Posterior vena cava (tissue), 2 donors: ENCODE measurements at regions of chr16 and their contacts with region 1.

Region 1: GRCh38 chr16:67461600-67462592 is 19.1 kb downstream of the ATP6V0D1 start:
- DNase-seq: no peak

Region 2: GRCh38 chr16:67428146-67428731 is 33.7 kb before region 1 on chr16:
- intact Hi-C with region 1: loop called (anchors 2 to 5 kb)
- DNase-seq: peak; percentile 90

Region 3: DNA sequence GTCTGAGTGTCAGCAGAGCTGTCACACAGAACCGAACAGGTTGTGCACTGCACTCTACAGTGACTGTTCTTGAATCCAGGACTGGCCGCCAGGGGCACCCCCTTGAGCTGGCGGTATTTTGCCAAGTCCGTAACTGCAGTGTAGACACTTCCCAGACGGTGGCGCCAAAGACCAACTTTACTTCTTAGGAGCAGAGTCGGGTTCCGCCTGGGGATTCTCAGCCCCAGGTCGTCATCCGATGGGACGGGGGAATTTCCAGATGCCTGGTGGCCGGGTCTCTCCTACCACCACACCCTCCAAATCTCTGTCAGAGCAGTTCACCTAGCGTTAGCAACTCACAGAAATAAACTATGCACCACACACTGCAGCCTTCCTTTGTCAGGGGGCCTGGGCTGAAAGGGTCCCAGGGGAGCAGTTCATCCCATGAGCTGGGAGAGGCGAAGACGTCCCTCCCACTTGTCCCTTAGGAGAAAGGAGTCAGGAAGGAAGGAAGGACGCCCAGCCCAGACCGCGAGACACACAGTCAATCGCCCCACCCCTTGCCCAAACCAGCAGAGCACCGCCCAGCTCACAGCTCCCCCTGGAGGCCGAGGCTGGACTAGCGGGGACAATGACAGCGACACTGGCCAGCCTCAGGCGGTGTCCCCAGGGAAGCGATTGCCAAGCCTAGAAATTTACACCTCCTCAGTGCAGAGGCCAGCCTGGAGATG is 59.4 kb after region 1 on chr16:
- intact Hi-C with region 1: no loop called
- DNase-seq: peak; percentile 98